ENCODE measurements at regions of chr17 and their contacts with region 1.

Region 1: DNA sequence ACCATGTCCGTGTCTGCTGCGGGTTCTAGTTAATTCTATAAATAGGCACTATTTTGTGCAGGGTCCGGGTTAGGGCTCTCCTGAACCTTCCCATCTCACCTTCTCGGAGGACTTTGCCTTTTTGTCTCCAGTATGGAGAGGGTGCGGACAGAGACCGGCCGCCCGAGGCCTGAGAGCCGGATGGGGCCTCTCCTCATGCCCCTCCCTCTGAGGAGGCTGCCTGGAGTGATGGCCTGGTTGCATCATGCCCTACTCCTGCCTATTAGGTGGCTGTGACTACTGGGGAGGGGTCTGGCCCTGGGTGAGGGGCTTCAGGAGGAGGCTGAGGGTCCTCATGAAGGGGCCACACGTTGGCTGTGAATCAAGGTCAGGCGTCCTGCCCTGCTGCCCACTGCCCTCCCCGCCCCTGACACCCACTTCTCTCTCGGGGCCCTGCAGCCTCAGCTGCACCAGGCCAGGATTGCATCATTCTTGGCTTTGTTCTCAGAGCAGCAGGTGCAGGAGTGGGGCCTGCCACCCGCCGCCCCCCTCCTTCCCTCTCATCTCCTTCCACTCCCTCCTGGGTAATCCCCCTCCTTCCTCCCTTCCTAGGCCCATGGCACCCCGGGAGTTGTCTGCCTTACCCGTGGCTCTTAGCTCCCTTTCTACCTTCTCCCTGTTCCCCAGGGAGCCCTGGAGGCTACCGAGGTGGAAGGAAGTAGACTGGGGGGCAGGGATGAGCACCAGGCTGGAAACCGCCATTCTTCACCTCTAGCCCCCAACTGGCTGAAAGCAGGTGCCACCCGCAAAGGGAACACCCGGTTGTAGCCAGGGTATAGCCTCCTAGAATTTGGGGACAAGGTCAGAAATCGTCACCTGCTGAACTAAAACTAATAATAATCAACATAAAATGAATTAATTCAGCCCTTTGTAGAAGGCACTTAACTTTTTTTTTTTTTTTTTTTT is 12.7 kb upstream of the ARHGAP23 start:
- DNase-seq: peak; percentile 11
- ATAC-seq: peak; percentile 76
- H3K4me3 ChIP-seq: no peak overlapping the region
- H3K27ac ChIP-seq: peak overlapping the region; percentile 34; the same call in 1 of the 2 replicates
- H3K4me1 ChIP-seq: peaks cover 19% of the 10 kb centered on the region
- H3K27me3 ChIP-seq: peaks cover 0 to 6% of the 10 kb centered on the region in 2 experiments; a peak in 3 of 4 replicates
- CTCF ChIP-seq: no peak
- EP300 ChIP-seq: no peak
- POLR2A ChIP-seq: no peak; the same call in 1 of the 2 replicates
- RAD21 ChIP-seq: no peak

Region 2: GRCh38 chr17:38322091-38322779 is 93.3 kb before region 1 on chr17:
- CTCF ChIA-PET with region 1: interaction called, 12 read pairs
- POLR2A ChIA-PET with region 1: no interaction called
- RAD21 ChIA-PET with region 1: interaction called, 3 read pairs
- SMC1A ChIA-PET with region 1: interaction called, 3 read pairs
- in situ Hi-C with region 1: no loop called
- intact Hi-C with region 1: no loop called
- DNase-seq: no peak
- ATAC-seq: peak; percentile 96
- H3K4me3 ChIP-seq: no peak overlapping the region
- H3K27ac ChIP-seq: no peak overlapping the region
- H3K4me1 ChIP-seq: no peaks in the 10 kb centered on the region; the same call in 1 of the 2 replicates
- H3K27me3 ChIP-seq: no peaks in the 10 kb centered on the region
- CTCF ChIP-seq: peak; percentile 51 to 84 (median 57)
- EP300 ChIP-seq: no peak
- POLR2A ChIP-seq: no peak
- RAD21 ChIP-seq: peak; percentile 58

Region 3: DNA sequence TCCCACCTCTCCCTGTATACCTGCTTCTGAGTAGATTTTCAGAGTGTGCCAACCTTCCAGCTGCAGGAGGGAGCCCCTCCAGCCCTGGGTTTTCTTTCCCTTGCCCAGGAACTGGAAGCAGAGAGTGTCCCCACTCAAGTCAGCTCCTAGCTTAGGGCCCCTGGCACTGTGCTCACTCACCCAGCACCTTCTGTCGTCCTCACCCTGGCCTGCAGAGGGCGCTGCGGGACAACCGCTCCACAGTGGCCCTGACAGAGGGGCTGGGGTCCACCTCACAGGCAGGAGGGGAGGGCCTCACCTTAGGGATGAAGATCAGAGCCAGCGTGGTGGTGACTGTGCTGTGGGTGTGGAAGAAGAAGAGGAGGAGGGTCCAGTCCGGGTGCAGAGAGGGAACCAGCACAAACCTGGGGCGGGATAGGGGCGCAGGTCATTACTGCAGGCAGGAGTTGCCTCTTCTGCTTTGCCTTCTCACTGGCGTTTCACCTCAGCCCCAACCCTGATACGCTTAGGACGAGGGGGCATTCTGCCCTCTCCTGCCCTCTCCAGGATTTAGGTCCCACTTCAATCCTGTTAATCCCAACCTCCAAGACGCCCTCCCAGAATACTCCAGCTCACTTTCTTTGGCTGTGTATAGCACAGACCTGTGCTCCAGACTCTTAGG is 81.8 kb before region 1 on chr17:
- CTCF ChIA-PET with region 1: interaction called, 36 read pairs
- POLR2A ChIA-PET with region 1: no interaction called
- RAD21 ChIA-PET with region 1: interaction called, 8 read pairs
- SMC1A ChIA-PET with region 1: interaction called, 17 read pairs
- in situ Hi-C with region 1: no loop called
- intact Hi-C with region 1: no loop called
- DNase-seq: no peak
- ATAC-seq: peak; percentile 84
- H3K4me3 ChIP-seq: no peak overlapping the region
- H3K27ac ChIP-seq: no peak overlapping the region
- H3K4me1 ChIP-seq: no peaks in the 10 kb centered on the region
- H3K27me3 ChIP-seq: no peaks in the 10 kb centered on the region
- CTCF ChIP-seq: peak; percentile 62 to 73 (median 67)
- EP300 ChIP-seq: no peak
- POLR2A ChIP-seq: no peak
- RAD21 ChIP-seq: peak; percentile 44; the same call in 1 of the 2 replicates

Region 4: DNA sequence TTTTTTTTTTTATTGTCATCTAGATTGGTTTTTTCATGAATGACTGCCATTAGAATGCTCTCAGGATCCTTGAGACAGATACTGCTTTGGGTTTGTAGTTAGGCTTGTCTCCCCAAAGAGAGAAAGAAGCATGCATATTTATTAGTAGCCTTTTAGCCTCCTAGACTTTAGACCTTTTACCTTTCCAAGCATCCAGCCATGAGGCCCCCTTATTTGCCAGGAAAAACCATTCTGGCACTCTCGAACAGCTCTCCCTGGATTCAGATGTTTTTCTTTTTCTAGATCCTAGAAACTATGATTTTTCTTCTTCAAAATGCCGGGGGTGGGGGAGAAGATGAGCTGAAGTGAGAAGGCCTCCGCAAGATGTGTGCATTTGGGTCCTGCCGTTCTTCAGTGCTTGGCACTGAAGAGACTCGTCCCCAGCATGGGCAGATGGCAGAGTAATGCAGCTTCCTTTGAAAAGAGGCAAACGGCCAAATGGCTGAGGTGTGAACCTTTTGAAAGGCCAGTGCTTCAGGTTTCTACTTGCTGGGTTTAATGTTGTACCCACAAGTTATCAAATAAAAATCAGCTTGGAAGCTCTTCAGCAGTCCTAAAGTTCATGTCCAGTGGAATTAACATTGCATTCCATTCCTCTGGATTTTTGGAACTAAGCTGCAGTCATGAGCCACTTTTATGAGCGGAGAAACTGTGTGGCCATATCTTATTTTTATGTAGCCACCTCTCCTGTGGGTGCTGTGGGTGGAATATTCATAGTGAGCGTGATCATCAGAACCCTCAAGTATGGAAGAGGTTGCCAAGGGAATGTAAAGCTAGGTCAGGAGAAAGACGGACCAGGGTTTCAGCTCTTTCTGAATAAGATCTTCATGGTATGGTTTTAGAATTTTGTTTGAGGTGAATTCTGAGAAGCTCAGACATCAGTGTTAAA is 56.7 kb before region 1 on chr17:
- CTCF ChIA-PET with region 1: interaction called, 349 read pairs
- POLR2A ChIA-PET with region 1: interaction called, 4 read pairs
- RAD21 ChIA-PET with region 1: interaction called, 172 read pairs
- SMC1A ChIA-PET with region 1: interaction called, 161 read pairs
- in situ Hi-C with region 1: no loop called
- intact Hi-C with region 1: no loop called
- DNase-seq: no peak
- ATAC-seq: no peak
- H3K4me3 ChIP-seq: no peak overlapping the region
- H3K27ac ChIP-seq: no peak overlapping the region
- H3K4me1 ChIP-seq: no peaks in the 10 kb centered on the region
- H3K27me3 ChIP-seq: no peaks in the 10 kb centered on the region
- CTCF ChIP-seq: no peak
- EP300 ChIP-seq: no peak
- POLR2A ChIP-seq: no peak
- RAD21 ChIP-seq: no peak

Region 5: DNA sequence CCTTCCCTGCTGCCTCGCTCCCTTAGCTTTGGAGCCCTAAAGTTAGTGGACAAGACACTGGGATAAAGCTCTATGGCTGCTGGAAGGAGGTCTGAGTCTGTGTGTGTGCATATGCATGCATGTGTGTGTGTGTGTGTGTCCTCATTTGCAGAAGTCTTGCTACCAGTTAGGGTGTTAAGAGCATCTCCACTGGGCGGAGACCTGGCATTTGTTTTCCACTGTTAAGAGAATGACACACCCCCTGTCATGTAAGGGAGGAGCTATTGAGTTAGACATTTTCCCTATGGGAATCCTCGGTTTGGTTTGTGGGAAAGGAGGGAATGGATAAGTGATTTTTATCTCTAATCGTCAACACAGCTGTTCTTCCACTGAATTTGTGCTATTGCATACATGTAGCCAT is 12.0 kb before region 1 on chr17:
- CTCF ChIA-PET with region 1: interaction called, 15 read pairs
- POLR2A ChIA-PET with region 1: no interaction called
- RAD21 ChIA-PET with region 1: interaction called, 3 read pairs
- SMC1A ChIA-PET with region 1: no interaction called
- in situ Hi-C with region 1: no loop called
- intact Hi-C with region 1: no loop called
- DNase-seq: no peak
- ATAC-seq: no peak
- H3K4me3 ChIP-seq: no peak overlapping the region
- H3K27ac ChIP-seq: no peak overlapping the region
- H3K4me1 ChIP-seq: no peaks in the 10 kb centered on the region
- H3K27me3 ChIP-seq: no peaks in the 10 kb centered on the region
- CTCF ChIP-seq: no peak
- EP300 ChIP-seq: no peak
- POLR2A ChIP-seq: no peak
- RAD21 ChIP-seq: no peak

Region 6: DNA sequence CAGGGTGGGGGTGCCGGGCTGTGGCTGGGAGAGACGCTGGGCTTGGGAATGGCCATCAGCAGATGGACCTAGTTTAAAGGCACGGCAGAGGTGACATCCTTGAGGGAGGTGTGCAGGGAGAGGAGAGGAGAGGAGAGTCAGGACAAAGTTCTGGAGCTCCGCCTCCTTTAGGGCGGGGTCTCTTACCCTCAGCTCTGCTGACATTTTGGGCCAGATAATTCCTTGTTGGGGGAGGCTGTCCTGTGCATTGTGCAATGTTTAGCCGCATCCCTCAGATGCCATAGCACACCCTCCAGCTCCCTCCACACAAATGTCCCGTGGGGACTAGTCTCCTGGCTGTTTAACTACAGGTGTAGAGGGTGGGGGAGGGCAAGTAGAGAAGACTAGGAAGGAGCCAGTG is 61.0 kb after region 1 on chr17:
- CTCF ChIA-PET with region 1: no interaction called
- POLR2A ChIA-PET with region 1: no interaction called
- RAD21 ChIA-PET with region 1: no interaction called
- SMC1A ChIA-PET with region 1: no interaction called
- in situ Hi-C with region 1: no loop called
- intact Hi-C with region 1: no loop called
- DNase-seq: no peak
- ATAC-seq: no peak
- H3K4me3 ChIP-seq: no peak overlapping the region
- H3K27ac ChIP-seq: no peak overlapping the region
- H3K4me1 ChIP-seq: no peaks in the 10 kb centered on the region
- H3K27me3 ChIP-seq: no peaks in the 10 kb centered on the region
- CTCF ChIP-seq: no peak
- EP300 ChIP-seq: no peak
- POLR2A ChIP-seq: no peak
- RAD21 ChIP-seq: no peak